Ovary (tissue), 10 donors: ENCODE measurements at regions of chr17 and their contacts with region 1.

Region 1: GRCh38 chr17:12667299-12667958 is 1.7 kb downstream of the MYOCD start:
- DNase-seq: peak; percentile 34 to 60 (median 43)
- H3K4me3 ChIP-seq: peak overlapping the region; percentile 55
- H3K27ac ChIP-seq: peak overlapping the region in 1 of 2 donors; percentile 77
- H3K4me1 ChIP-seq: peaks cover 5% of the 10 kb centered on the region
- H3K27me3 ChIP-seq: no peaks in the 10 kb centered on the region
- CTCF ChIP-seq: peak; percentile 31 to 58 (median 37)
- EP300 ChIP-seq: no peak
- POLR2A ChIP-seq: no peak

Region 2: GRCh38 chr17:12180644-12181261 is 486.7 kb before region 1 on chr17:
- intact Hi-C with region 1: loop called in 2 of 4 experiments (anchors 5 to 10 kb)
- DNase-seq: peak in 4 of 5 donors; percentile 25 to 49 (median 38)
- H3K4me3 ChIP-seq: no peak overlapping the region
- H3K27ac ChIP-seq: no peak overlapping the region
- H3K4me1 ChIP-seq: no peaks in the 10 kb centered on the region
- H3K27me3 ChIP-seq: no peaks in the 10 kb centered on the region
- CTCF ChIP-seq: peak; percentile 37 to 69 (median 60)
- EP300 ChIP-seq: no peak
- POLR2A ChIP-seq: no peak

Region 3: GRCh38 chr17:12256380-12256995 is 410.9 kb before region 1 on chr17:
- intact Hi-C with region 1: loop called in 3 of 4 experiments (anchors 1 to 10 kb)
- DNase-seq: peak; percentile 39 to 61 (median 56)
- H3K4me3 ChIP-seq: no peak overlapping the region
- H3K27ac ChIP-seq: no peak overlapping the region
- H3K4me1 ChIP-seq: no peaks in the 10 kb centered on the region
- H3K27me3 ChIP-seq: no peaks in the 10 kb centered on the region
- CTCF ChIP-seq: peak; percentile 62 to 79 (median 64)
- EP300 ChIP-seq: no peak
- POLR2A ChIP-seq: no peak

Region 4: DNA sequence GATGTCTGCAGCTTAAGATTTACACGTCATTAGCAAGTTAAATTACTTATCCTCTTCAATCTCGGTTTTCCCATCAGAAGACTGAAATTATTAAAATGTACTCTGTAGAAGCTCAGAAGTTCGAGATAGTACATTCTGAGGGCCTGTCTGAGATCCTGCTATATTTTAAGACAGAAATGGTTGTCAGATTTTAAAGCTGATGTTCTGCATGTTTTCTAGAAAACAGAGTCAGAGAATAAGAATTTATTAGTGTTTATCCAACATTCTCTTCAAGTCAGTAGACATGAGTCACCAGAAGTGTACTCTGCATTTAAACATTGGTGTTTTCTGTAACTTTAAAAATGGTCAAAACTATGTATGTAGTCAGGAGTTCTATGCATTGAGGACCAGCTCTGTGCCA is 156.9 kb before region 1 on chr17:
- intact Hi-C with region 1: no loop called
- DNase-seq: no peak
- H3K4me3 ChIP-seq: no peak overlapping the region
- H3K27ac ChIP-seq: no peak overlapping the region
- H3K4me1 ChIP-seq: no peaks in the 10 kb centered on the region
- H3K27me3 ChIP-seq: no peaks in the 10 kb centered on the region
- CTCF ChIP-seq: no peak
- EP300 ChIP-seq: no peak
- POLR2A ChIP-seq: no peak

Region 5: DNA sequence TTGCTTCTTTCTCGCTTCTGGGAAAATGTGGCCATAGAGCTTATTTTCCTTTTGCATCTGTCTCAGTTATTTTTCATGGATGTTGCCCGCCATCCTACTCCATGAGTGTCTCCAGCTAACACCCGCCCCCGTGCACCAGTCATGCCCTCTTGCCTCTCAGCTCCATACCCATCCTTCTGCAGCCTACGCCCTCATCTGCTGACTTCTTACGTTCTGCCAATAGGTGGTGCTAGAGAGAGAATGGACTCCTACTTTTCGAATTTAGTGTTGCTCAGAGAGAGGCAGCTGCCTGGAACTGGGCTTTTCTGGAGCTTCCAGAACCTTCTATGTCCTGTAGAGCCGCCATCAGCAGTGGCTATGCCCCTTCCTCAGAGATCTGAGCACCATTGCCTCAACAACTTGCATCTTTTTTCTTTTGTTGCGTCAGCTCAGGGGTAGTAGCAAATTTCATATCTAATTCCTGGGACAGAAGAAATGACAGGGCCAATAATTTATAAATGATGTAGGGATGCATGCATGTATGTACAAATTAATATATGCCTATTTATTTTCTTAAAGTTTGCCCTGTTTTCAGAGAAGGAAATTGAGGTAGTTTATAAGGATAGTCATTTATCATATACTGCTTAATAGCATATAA is 121.4 kb before region 1 on chr17:
- intact Hi-C with region 1: loop called in 3 of 4 experiments (anchors 2 to 5 kb)
- DNase-seq: peak; percentile 22 to 46 (median 24)
- H3K4me3 ChIP-seq: no peak overlapping the region
- H3K27ac ChIP-seq: no peak overlapping the region
- H3K4me1 ChIP-seq: peaks cover 3% of the 10 kb centered on the region
- H3K27me3 ChIP-seq: no peaks in the 10 kb centered on the region
- CTCF ChIP-seq: peak; percentile 31 to 50 (median 40)
- EP300 ChIP-seq: no peak
- POLR2A ChIP-seq: no peak

Region 6: GRCh38 chr17:12624211-12624610 is 43.2 kb before region 1 on chr17:
- intact Hi-C with region 1: no loop called
- DNase-seq: no peak
- H3K4me3 ChIP-seq: no peak overlapping the region
- H3K27ac ChIP-seq: no peak overlapping the region
- H3K4me1 ChIP-seq: peaks cover 16% of the 10 kb centered on the region
- H3K27me3 ChIP-seq: no peaks in the 10 kb centered on the region
- CTCF ChIP-seq: no peak
- EP300 ChIP-seq: no peak
- POLR2A ChIP-seq: no peak

Region 7: GRCh38 chr17:12637015-12637414 is 30.4 kb before region 1 on chr17:
- intact Hi-C with region 1: no loop called
- DNase-seq: no peak
- H3K4me3 ChIP-seq: no peak overlapping the region
- H3K27ac ChIP-seq: no peak overlapping the region
- H3K4me1 ChIP-seq: peaks cover 5% of the 10 kb centered on the region
- H3K27me3 ChIP-seq: no peaks in the 10 kb centered on the region
- CTCF ChIP-seq: no peak
- EP300 ChIP-seq: no peak
- POLR2A ChIP-seq: no peak

Region 8: DNA sequence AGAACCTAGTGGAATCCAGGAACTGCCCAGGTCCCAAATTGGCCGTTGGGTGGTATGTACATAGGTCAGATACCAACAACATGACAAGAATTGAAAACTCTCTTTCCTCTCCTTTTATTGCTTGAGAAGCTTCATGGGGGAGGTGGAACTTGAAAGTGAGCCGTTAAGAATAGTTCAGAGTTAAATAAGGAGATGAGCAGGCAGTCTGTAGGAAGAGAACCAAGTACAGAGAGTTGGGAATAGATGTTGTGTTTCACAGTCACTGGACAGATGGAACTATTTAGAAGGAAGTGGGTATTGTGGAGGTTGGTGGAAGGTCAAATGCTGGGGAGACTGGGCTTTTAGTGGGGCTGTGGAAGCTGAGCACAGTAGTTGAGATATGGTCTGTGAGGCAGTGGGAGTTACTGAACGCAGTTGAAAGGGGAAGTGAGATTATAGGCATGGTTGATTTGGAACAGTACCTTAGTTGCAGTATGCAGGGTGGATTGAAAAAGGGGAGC is 148.3 kb after region 1 on chr17:
- intact Hi-C with region 1: no loop called
- DNase-seq: no peak
- H3K4me3 ChIP-seq: no peak overlapping the region
- H3K27ac ChIP-seq: no peak overlapping the region
- H3K4me1 ChIP-seq: peaks cover 7% of the 10 kb centered on the region
- H3K27me3 ChIP-seq: no peaks in the 10 kb centered on the region
- CTCF ChIP-seq: no peak
- EP300 ChIP-seq: no peak
- POLR2A ChIP-seq: no peak